ENCODE measurements at regions of chr10 and their contacts with region 1.

Region 1: DNA sequence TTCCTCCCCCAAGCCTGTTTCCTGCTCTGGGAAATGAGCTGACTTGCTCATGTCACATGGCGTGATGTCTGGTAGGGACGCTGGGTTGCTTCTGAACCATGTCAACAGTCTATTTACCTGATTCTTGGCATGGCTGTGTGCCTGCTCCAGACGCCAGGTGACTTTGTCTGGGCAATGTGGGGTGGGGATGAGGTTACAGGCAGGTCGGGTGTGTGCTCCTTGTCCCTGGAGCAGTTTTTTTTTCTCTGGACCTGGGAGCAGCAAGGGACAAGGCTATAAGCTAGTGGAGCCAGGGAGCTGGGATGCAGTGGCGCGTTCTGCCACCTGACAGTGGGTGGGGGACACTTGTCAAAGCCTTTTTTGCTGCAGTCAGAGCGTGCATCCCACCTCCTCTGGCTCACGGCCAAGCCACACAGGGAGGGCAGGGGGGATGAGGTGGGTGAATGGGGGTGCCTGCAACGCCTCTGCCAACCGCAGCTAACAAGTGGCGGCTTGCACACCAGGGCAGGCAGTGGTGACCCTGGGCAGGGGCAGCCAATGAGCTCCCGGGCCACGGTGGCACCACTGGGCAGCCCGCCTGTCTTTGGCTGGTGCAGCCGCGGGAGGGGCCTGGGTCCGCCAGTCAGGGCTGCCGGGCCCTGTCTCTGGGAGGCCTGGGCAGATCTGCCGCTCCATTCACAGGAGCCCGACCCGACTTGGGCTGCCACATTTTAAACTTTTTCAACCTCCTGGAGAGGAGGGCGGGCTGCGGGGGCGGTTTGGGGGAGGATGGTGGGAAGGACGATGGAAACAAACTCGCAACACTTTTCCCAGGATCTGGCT is 22.9 kb downstream of the DNAJB12 start:
- DNase-seq: peak in 1 of 2 donors; percentile 92
- H3K4me3 ChIP-seq: no peak overlapping the region
- H3K27ac ChIP-seq: peak overlapping the region; percentile 75
- H3K4me1 ChIP-seq: peaks cover 86% of the 10 kb centered on the region
- H3K27me3 ChIP-seq: no peaks in the 10 kb centered on the region
- CTCF ChIP-seq: peak in 1 of 3 experiments; percentile 21
- POLR2A ChIP-seq: no peak

Region 2: DNA sequence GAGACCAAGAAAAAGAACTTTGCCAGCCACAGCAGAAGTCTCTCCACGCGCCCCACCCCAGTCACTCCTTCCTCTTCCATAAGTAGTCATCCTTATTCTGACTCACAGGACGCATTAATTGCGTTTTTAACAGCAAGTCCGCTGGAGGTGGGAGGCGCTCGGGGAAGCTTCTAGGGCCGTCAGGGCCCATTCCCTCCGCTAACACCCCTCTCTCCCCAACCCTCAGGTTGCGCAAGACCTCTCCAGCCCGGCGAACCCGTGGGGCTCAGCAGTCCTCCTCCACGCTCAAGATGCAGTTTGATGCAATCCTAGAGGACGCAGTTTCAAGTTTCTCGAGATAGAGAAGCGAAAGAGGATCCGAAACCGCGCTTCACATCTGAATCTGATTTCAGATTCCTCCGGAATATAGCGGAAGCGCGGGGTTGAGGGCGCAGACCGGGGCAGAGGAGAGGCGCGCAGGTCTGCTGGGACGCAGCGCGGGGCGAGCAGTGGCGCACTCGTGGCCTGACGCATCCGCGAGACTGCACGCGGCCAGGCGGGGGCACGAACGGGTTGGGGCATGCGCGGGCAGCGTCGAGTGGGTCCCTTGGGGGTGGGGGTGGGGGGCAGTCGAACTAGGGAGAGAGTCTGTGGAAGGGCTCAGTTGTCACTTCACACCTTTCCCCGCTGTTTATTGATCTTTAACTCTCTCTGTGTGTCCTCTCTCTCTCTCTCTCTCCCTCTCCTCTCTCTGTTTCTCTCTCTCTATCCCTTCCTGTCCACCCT is 443.0 kb before region 1 on chr10:
- intact Hi-C with region 1: no loop called
- DNase-seq: no peak
- H3K4me3 ChIP-seq: peak overlapping the region; percentile 50 to 51
- H3K27ac ChIP-seq: peak overlapping the region; percentile 85
- H3K4me1 ChIP-seq: peaks cover 44% of the 10 kb centered on the region
- H3K27me3 ChIP-seq: no peaks in the 10 kb centered on the region
- CTCF ChIP-seq: no peak
- POLR2A ChIP-seq: peak in 1 of 2 donors; percentile 35

Region 3: GRCh38 chr10:71963756-71964668 is 367.8 kb before region 1 on chr10 and contains the start of gene CHST3:
- intact Hi-C with region 1: loop called (anchors 10 kb)
- DNase-seq: no peak
- H3K4me3 ChIP-seq: peak within 1 kb of the TSS; percentile 59 to 70
- H3K27ac ChIP-seq: peak within 1 kb of the TSS; percentile 98
- H3K4me1 ChIP-seq: peaks cover 53% of the 10 kb centered on the region
- H3K27me3 ChIP-seq: no peaks in the 10 kb centered on the region
- CTCF ChIP-seq: peak in 1 of 3 experiments; percentile 9
- POLR2A ChIP-seq: no peak
- total RNA-seq, gene CHST3: 26.0 TPM

Region 4: DNA sequence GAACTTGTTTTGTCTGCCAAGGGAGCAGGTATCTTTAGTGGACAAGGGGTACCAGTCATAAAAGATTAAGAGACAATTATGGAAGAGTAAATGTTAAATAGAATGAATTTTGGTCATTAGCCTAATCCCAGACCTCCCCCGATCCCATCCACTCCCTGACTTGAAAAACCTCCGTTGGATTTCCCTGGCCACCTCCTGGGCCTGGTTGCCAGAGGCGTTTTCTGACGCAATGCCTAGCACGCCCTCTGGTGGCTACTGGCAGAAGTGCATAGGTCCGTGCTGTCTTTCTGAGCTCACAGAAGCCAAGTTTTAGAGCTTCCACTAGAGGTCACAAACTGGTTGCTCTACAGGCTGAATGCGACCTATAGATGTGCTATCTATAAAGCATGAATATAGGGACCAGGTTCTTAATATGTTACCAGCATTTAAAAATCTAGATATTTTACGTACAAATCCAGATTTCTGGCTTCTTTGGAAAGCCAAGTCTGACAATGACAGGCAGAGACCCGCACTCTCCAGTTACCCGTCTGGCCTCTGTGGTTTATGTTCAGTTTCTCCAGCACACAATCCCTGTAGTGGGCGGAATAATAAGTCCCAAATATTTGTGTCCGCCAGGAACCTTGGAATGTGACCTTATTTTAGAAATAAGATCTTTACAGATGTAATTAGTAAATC is 283.2 kb before region 1 on chr10:
- intact Hi-C with region 1: loop called (anchors 5 kb)
- DNase-seq: peak in 1 of 2 donors; percentile 94
- H3K4me3 ChIP-seq: no peak overlapping the region
- H3K27ac ChIP-seq: no peak overlapping the region
- H3K4me1 ChIP-seq: peaks cover 5% of the 10 kb centered on the region
- H3K27me3 ChIP-seq: no peaks in the 10 kb centered on the region
- CTCF ChIP-seq: peak; percentile 96 to 100 (median 100)
- POLR2A ChIP-seq: no peak

Region 5: GRCh38 chr10:72114706-72115450 is 216.9 kb before region 1 on chr10:
- intact Hi-C with region 1: loop called (anchors 5 kb)
- DNase-seq: no peak
- H3K4me3 ChIP-seq: no peak overlapping the region
- H3K27ac ChIP-seq: no peak overlapping the region
- H3K4me1 ChIP-seq: peaks cover under 1% of the 10 kb centered on the region
- H3K27me3 ChIP-seq: no peaks in the 10 kb centered on the region
- CTCF ChIP-seq: no peak
- POLR2A ChIP-seq: no peak

Region 6: DNA sequence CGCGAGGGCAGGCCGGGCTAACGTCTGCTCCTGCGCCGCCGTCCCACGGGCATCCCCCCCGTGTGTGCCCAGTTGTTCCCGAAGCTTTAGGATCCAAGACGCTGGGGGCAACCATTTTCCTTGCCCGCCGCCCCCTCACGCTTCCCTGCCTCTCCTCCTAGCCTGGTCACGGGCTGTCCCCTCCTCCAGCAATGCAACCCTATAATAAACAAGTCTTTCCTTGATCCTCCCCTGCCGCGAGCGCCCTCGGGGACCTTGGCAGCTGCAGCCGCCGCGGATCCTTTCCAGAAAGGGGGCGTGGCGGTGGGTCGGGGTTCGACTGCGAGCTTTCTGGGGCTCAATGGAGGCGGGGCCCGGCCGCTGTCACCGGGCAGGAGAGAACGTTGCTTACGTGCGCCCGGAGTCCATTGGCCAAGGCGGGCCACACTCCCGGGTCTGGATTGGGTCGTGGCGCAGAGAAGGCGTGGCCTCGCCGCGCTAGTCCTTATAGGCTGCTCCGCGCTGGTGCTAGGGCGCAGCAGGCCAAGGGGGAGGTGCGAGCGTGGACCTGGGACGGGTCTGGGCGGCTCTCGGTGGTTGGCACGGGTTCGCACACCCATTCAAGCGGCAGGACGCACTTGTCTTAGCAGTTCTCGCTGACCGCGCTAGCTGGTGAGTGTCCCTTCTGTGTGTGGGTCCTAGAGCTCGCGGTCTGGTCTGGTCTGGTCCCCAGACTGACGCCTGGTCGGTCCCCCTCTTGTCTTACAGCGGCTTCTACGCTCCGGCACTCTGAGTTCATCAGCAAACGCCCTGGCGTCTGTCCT is 58.2 kb before region 1 on chr10 and contains the start of gene DDIT4:
- intact Hi-C with region 1: loop called (anchors 5 kb)
- DNase-seq: peak in 1 of 2 donors; percentile 100
- H3K4me3 ChIP-seq: peak within 1 kb of the TSS; percentile 90 to 99
- H3K27ac ChIP-seq: peak within 1 kb of the TSS; percentile 99
- H3K4me1 ChIP-seq: peaks cover 34% of the 10 kb centered on the region
- H3K27me3 ChIP-seq: no peaks in the 10 kb centered on the region
- CTCF ChIP-seq: no peak
- POLR2A ChIP-seq: peak; percentile 99 to 100
- total RNA-seq, gene DDIT4: 1,063 TPM